Right lobe of liver (tissue), 6 donors: ENCODE measurements at regions of chr1 and their contacts with region 1.

Region 1: DNA sequence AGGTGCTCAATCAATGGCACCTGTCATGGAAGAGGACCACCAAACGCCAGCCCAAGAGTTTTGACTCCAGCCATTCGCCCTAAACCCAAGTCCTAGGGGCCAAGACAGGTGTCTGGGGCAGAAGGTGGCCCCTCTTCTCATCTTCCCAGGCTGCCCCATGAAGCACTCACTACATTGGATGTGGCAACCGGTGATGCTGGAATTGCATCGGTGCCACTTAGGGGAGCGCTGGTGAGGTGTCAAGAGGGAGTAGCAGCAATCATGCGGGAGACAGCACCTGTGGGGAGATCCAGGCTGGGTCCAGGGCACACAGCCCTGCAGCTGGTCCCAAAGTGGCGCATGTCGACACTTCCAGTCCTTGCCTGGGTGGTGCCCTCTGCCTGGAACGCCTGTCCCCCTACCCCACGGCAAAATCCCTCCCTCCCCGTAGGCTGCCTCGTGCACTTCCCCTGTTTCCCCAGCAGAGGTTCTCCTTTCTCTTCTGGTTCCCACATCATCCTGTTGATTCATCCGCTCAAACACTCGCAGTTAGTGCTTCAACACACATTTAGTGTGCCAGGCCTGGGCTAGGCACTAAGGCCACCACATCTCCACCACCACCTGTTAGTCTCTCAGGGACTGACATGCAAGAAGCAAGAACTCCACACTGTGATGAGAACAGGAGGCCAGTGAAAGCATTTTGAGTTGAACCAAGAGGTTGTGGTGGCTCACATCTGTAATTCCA is 18.5 kb downstream of the PLA2G2D start:
- DNase-seq: peak in 1 of 3 donors; percentile 27
- ATAC-seq: peak; percentile 87 to 94 (median 89)
- H3K4me3 ChIP-seq: no peak overlapping the region
- H3K27ac ChIP-seq: no peak overlapping the region
- H3K4me1 ChIP-seq: peaks cover 0 to 2% (median 0%) of the 10 kb centered on the region in 4 donors
- H3K27me3 ChIP-seq: no peaks in the 10 kb centered on the region
- CTCF ChIP-seq: peak; percentile 71 to 83 (median 72)
- POLR2A ChIP-seq: no peak

Region 2: DNA sequence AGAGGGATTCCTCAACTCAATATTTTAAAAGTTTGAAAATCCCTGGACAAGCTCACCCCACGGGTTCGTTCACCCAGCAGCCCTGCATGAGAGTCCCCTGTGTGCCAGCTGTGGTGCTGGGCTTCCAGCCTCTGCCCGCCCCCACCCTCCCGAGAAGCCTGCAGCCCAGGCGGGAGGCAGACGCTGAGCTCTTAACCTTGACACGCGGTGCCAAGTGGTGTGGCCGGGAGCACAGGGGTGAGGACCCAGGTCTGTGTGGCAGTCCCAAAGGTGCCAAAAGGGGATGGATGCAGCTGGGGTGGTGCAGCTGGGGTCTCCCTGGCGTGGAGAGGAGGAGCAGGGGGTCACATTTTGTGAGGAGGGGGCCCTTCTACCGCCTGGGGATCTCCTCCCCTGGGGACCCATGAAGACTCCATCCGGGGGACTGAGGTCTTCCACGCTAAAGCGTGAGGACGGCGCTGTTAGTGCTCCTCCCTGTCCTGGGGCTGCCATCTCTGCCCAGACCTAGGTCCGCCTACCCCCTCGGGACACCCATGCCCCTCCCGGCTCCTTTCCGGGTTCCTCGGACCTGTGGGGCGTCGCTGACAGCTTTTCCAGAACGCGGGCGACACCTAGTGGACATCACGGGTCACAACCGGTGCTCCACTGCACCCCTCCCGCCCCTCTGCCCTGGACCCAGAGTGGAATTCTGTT is 51.3 kb after region 1 on chr1:
- intact Hi-C with region 1: loop called in 1 of 2 experiments (anchors 5 kb)
- DNase-seq: peak; percentile 80 to 87 (median 84)
- ATAC-seq: peak; percentile 71 to 78 (median 74)
- H3K4me3 ChIP-seq: peak overlapping the region in 2 of 3 donors; percentile 16 to 28
- H3K27ac ChIP-seq: peak overlapping the region in 2 of 3 donors; percentile 76 to 79
- H3K4me1 ChIP-seq: peaks cover 0 to 26% (median 13%) of the 10 kb centered on the region in 4 donors
- H3K27me3 ChIP-seq: no peaks in the 10 kb centered on the region
- CTCF ChIP-seq: peak; percentile 93 to 98 (median 96)
- POLR2A ChIP-seq: no peak

Region 3: GRCh38 chr1:20302093-20302471 is 201.3 kb after region 1 on chr1:
- intact Hi-C with region 1: no loop called
- DNase-seq: no peak
- ATAC-seq: no peak
- H3K4me3 ChIP-seq: no peak overlapping the region
- H3K27ac ChIP-seq: no peak overlapping the region
- H3K4me1 ChIP-seq: no peaks in the 10 kb centered on the region
- H3K27me3 ChIP-seq: no peaks in the 10 kb centered on the region
- CTCF ChIP-seq: no peak
- POLR2A ChIP-seq: no peak